A549 (cell line): ENCODE measurements at regions of chr15 and their contacts with region 1.

Region 1: DNA sequence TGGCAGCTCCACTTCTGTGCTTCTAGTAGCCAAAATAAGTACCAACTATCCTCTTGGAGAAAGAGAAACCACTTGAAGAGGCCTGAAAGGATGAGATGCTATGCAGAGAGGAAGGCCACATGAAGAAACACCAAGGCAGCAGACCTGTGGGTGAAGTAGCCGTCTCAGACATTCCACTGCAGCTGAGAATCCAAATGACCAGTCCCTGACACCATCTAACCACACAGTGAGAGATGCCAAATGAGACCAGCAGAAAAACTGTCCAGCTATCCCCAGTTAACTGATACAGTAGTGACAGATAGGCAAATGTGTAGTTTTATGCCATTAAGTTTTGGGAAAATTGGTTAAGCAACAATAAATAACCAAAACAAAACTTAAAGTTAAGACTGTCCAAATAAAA is 47.9 kb upstream of the ZSCAN2 start:
- DNase-seq: no peak
- ATAC-seq: no peak
- H3K4me3 ChIP-seq: no peak overlapping the region
- H3K27ac ChIP-seq: no peak overlapping the region
- H3K4me1 ChIP-seq: 0 out of 3 replicates have a peak, but pooled peaks cover 9% of the 10 kb centered on the region
- CTCF ChIP-seq: no peak
- EP300 ChIP-seq: no peak
- POLR2A ChIP-seq: no peak
- RAD21 ChIP-seq: no peak

Region 2: GRCh38 chr15:84570164-84570735 is 17.4 kb after region 1 on chr15:
- CTCF ChIA-PET with region 1: interaction called, 15 read pairs
- POLR2A ChIA-PET with region 1: no interaction called
- DNase-seq: peak; percentile 44 to 48
- ATAC-seq: peak; percentile 78 to 79
- H3K4me3 ChIP-seq: peak overlapping the region; percentile 93
- H3K27ac ChIP-seq: peak overlapping the region; percentile 91 to 96
- H3K4me1 ChIP-seq: peaks cover 5% of the 10 kb centered on the region
- CTCF ChIP-seq: no peak
- EP300 ChIP-seq: no peak
- POLR2A ChIP-seq: peak; percentile 35; the same call in 1 of the 2 replicates
- RAD21 ChIP-seq: no peak